PC-9 (cell line): ENCODE measurements at regions of chr13 and their contacts with region 1.

Region 1: DNA sequence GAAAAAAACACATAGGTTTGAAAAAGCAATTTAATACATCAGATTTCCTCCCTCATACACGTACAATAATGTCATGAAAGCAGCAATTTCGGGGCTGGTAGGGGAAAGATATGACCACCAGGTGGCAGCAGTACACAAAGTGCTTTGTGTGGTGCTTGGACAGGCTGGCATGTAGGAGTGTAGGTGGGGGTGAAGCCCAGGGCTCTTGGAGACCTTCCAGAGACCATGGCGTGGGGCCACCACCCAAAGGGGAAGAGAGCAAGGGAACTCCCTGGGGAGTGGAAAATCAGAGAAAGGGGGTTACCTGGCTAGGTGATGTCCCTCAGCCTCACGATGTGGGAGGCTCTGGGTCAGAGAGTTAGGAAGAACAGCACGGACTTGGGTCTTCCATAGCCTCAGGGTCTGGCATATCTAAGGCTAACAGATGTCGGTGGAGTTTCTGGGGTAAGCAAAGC is 11.8 kb upstream of the CCNA1 start:
- DNase-seq: peak; percentile 52 to 63
- H3K4me3 ChIP-seq: no peak overlapping the region
- H3K27ac ChIP-seq: no peak overlapping the region
- H3K4me1 ChIP-seq: peaks cover 40% of the 10 kb centered on the region
- H3K27me3 ChIP-seq: no peaks in the 10 kb centered on the region
- CTCF ChIP-seq: peak; percentile 89

Region 2: DNA sequence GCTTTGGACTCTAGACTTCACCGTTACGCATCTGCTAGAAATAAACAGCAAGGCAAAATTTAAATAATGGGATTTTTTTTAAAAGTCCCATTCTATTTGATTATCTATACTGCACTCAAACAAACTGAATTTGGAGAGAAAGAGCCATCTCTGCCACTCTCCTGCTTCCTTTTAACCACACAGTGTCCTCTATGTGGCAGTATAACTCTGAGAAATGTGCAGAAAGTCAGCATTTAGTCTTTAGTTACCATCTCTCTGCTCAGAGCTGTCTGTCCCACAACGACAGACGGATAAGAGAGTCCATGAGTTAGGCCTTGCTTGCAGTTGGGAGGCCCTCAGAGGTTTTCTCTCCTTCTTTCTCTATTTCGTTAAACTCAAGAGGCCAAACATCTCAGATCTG is 33.1 kb after region 1 on chr13:
- CTCF ChIA-PET with region 1: no interaction called
- POLR2A ChIA-PET with region 1: no interaction called
- intact Hi-C with region 1: no loop called
- DNase-seq: no peak
- H3K4me3 ChIP-seq: no peak overlapping the region
- H3K27ac ChIP-seq: no peak overlapping the region
- H3K4me1 ChIP-seq: no peaks in the 10 kb centered on the region; the same call in 1 of the 2 replicates
- H3K27me3 ChIP-seq: no peaks in the 10 kb centered on the region
- CTCF ChIP-seq: 0 out of 2 replicates have a peak, but pooled peaks have one; percentile 29

Region 3: DNA sequence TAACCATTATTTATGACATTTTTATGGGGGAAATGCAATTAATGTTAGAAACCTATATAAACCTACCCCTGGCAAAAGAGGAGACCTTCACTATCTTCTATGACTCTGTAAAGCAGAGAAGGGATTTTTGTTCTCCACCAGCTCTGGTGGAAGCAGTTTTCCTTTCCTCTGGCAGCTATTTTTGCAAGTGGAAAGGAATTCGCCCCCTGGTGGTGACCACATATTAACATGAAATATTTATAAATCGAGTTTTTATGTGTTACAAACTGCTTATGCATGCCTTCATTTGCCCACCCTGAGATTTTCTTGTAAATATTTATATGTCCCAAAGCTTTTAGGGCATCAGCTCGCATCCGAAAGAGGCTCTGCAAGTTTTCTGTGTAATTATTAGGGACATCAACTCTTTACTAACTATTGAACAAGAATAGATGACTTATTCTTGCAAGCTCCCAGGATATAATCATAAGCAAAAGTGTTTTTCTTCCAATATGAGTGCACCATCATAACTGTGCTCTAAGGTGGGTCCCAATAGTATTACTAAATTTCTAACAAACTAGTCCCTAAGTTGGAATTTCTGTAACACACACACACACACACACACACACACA is 315.8 kb after region 1 on chr13:
- CTCF ChIA-PET with region 1: interaction called, 3 read pairs
- POLR2A ChIA-PET with region 1: no interaction called
- intact Hi-C with region 1: loop called (anchors 1 kb)
- DNase-seq: peak in 1 of 2 experiments; percentile 11
- H3K4me3 ChIP-seq: no peak overlapping the region
- H3K27ac ChIP-seq: no peak overlapping the region
- H3K4me1 ChIP-seq: 0 out of 2 replicates have a peak, but pooled peaks cover 5% of the 10 kb centered on the region
- H3K27me3 ChIP-seq: no peaks in the 10 kb centered on the region
- CTCF ChIP-seq: peak; percentile 91

Region 4: GRCh38 chr13:36841391-36841790 is 420.9 kb after region 1 on chr13:
- CTCF ChIA-PET with region 1: no interaction called
- POLR2A ChIA-PET with region 1: no interaction called
- intact Hi-C with region 1: loop called (anchors 5 kb)
- DNase-seq: no peak
- H3K4me3 ChIP-seq: no peak overlapping the region
- H3K27ac ChIP-seq: no peak overlapping the region
- H3K4me1 ChIP-seq: no peaks in the 10 kb centered on the region
- H3K27me3 ChIP-seq: no peaks in the 10 kb centered on the region
- CTCF ChIP-seq: 0 out of 2 replicates have a peak, but pooled peaks have one; percentile 21

Region 5: DNA sequence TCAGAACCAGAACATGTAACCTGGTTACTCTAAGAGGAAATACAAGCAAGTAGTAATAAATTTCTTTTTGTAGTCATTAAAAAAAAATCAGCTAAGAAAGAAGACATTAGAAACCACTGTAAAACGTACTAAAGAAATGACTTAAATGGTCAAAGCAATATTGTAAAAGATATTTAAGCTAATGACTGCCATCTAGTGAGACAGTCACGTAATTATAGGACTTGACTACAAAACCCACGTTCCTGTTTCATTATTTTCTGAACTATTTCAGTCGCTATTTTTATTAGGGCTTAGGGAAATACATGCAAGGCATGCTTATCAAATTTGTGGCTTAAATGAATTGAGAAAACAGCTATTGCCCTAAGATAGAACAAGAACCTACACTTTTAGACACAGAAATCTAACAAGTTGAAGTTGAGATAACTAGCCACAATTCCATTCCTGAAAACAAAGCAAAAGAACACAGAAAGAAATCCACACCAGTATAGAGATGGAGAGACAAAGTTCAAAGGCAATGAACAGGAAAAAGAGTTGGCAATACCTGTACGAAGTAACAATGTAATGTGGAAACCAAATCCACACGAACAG is 560.8 kb after region 1 on chr13:
- CTCF ChIA-PET with region 1: no interaction called
- POLR2A ChIA-PET with region 1: no interaction called
- intact Hi-C with region 1: loop called (anchors 5 kb)
- DNase-seq: no peak
- H3K4me3 ChIP-seq: no peak overlapping the region
- H3K27ac ChIP-seq: no peak overlapping the region
- H3K4me1 ChIP-seq: no peaks in the 10 kb centered on the region
- H3K27me3 ChIP-seq: no peaks in the 10 kb centered on the region
- CTCF ChIP-seq: peak; percentile 74